Transverse colon (tissue), 4 donors: ENCODE measurements at regions of chr20 and their contacts with region 1.

Region 1: GRCh38 chr20:57391074-57391554 is at the start of gene RBM38:
- DNase-seq: peak; percentile 79
- H3K4me3 ChIP-seq: peak within 1 kb of the TSS; percentile 82 to 88 (median 87)
- H3K27ac ChIP-seq: peak within 1 kb of the TSS; percentile 92 to 95 (median 93)
- H3K4me1 ChIP-seq: peaks cover 23 to 66% (median 43%) of the 10 kb centered on the region in 4 donors
- H3K27me3 ChIP-seq: no peaks in the 10 kb centered on the region
- CTCF ChIP-seq: no peak
- EP300 ChIP-seq: no peak
- POLR2A ChIP-seq: no peak
- total RNA-seq, gene RBM38: 26.5 to 37.4 (median 30.4) TPM

Region 2: DNA sequence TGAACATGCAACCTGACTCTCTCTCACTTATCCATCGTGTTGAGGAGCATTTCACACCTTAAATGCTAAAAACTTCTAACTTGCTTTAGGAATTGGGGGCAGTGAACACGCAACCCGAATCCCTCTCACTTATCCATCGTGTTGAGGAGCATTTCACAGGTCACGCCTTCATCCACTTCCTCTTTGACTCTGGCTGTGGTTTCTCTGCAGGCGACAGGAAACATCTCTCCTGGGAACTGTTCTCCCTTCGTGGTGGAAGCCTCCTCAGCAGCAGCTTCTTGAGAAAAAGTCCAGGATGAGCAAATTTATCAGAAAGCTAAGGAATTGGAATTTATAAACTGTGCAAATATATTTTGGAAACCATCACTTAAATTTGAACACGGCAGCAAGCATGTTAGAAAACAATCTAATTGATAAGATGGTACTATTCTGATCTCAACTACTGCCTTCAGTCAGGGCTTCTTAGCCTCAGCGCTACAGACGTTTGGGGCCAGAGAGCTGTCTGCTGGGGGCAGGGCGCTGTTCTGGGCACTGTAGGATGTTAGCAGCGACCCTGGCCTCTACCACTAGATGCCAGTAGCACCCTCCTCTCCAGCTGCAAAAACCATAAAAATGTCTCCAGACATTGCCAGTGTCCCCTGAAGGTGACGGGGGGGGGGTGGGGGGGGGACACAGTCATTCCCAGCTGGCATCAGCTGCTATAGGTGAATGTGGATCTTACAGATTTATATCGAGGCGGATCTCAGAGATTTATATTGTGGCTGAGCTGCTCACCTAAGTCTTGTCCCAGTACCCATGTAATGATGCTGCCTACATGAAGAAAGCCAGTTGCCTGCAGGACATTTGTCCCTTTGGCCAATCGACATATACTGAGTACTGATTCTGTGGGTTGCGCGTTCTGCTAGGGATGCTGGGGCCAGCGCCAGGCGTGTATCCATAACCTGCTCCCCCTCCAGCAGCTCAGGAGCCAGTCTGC is 107.6 kb after region 1 on chr20:
- in situ Hi-C with region 1: loop called (anchors 5 to 10 kb)
- intact Hi-C with region 1: no loop called
- DNase-seq: no peak
- H3K4me3 ChIP-seq: no peak overlapping the region
- H3K27ac ChIP-seq: no peak overlapping the region
- H3K4me1 ChIP-seq: peaks cover 0 to 15% (median 7%) of the 10 kb centered on the region in 4 donors
- H3K27me3 ChIP-seq: no peaks in the 10 kb centered on the region
- CTCF ChIP-seq: peak in 2 of 5 experiments; percentile 18 to 31
- EP300 ChIP-seq: no peak
- POLR2A ChIP-seq: no peak

Region 3: GRCh38 chr20:57622579-57623377 is 231.7 kb after region 1 on chr20:
- in situ Hi-C with region 1: loop called in 1 of 4 experiments (anchors 25 kb)
- intact Hi-C with region 1: no loop called
- DNase-seq: peak; percentile 79
- H3K4me3 ChIP-seq: no peak overlapping the region
- H3K27ac ChIP-seq: no peak overlapping the region
- H3K4me1 ChIP-seq: peaks cover 6 to 38% (median 15%) of the 10 kb centered on the region in 4 donors
- H3K27me3 ChIP-seq: no peaks in the 10 kb centered on the region
- CTCF ChIP-seq: peak; percentile 73 to 85 (median 79)
- EP300 ChIP-seq: no peak
- POLR2A ChIP-seq: no peak

Region 4: GRCh38 chr20:58209652-58210397 is 818.7 kb after region 1 on chr20:
- in situ Hi-C with region 1: loop called in 2 of 4 experiments (anchors 25 kb)
- intact Hi-C with region 1: no loop called
- DNase-seq: peak; percentile 85
- H3K4me3 ChIP-seq: no peak overlapping the region
- H3K27ac ChIP-seq: no peak overlapping the region
- H3K4me1 ChIP-seq: peaks cover 0 to 8% (median 0%) of the 10 kb centered on the region in 4 donors
- H3K27me3 ChIP-seq: peaks cover 34% of the 10 kb centered on the region
- CTCF ChIP-seq: peak; percentile 100
- EP300 ChIP-seq: no peak
- POLR2A ChIP-seq: no peak